A673 (cell line): ENCODE measurements at regions of chr7 and their contacts with region 1.

Region 1: DNA sequence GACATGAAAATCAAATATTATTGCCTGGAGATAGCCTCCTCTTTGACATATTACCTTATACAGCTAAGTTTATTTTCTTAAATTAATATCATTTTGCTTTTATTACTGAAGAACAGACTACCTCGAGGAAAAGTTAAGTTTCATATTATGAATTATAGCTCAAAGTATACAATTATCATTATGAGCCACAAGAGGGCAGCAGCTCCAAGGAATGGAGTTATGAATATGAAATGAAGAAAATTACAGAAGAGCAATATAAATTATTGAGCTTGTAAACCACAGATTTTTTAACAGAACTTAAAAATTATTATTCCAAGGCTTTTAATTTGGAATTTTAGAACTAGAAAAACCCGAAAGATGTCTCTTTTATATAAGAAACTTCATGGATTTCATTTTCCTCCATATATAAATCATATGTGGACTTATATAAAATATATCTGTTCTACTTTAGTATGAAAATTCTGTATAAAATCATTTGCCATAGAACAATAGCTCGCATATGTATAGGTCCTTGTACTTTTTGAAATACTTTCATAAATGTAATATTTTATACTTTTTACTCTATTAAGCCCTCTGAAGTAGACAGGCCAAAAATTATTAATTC is 40.1 kb downstream of the IQUB start:
- DNase-seq: peak; percentile 53
- H3K4me3 ChIP-seq: no peak overlapping the region
- H3K27ac ChIP-seq: no peak overlapping the region
- H3K4me1 ChIP-seq: no peaks in the 10 kb centered on the region
- H3K27me3 ChIP-seq: no peaks in the 10 kb centered on the region
- CTCF ChIP-seq: peak; percentile 81

Region 2: GRCh38 chr7:123417580-123417979 is 76.7 kb before region 1 on chr7:
- CTCF ChIA-PET with region 1: no interaction called
- POLR2A ChIA-PET with region 1: no interaction called
- intact Hi-C with region 1: no loop called
- DNase-seq: no peak
- H3K4me3 ChIP-seq: no peak overlapping the region
- H3K27ac ChIP-seq: no peak overlapping the region
- H3K4me1 ChIP-seq: no peaks in the 10 kb centered on the region
- H3K27me3 ChIP-seq: no peaks in the 10 kb centered on the region
- CTCF ChIP-seq: no peak

Region 3: DNA sequence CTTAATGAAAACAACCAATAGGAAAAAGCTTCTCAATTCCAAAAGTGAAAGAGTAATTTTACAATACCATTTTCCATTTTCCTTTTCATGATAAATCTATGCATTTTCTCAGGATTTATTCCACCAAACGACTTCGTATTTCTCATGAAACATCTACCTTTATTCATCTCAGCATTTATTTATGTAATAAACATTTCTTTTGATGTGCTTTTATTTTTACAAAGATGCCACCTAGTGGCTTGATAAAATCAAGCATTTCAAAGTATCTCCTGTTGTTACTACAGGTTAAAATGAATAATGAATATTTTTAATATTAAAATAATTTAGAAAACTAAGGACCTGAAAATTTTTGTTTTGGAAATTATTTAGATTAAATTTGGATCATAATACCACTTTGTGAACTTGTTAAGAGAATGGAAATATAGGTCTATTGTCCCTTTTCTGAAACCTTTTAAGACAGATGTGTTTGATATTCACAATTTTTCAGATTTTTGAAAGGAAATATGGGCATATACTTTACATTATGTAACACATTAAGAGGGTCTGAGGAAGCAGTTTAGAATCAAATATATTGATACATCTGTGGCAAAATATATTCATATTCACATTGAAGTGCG is 42.8 kb after region 1 on chr7:
- CTCF ChIA-PET with region 1: interaction called, 4 read pairs
- POLR2A ChIA-PET with region 1: no interaction called
- intact Hi-C with region 1: loop called (anchors 1 kb)
- DNase-seq: peak; percentile 50
- H3K4me3 ChIP-seq: no peak overlapping the region
- H3K27ac ChIP-seq: peak overlapping the region; percentile 11
- H3K4me1 ChIP-seq: peaks cover 32% of the 10 kb centered on the region
- H3K27me3 ChIP-seq: peaks cover 8% of the 10 kb centered on the region
- CTCF ChIP-seq: peak; percentile 70

Region 4: GRCh38 chr7:123624527-123625183 is 130.4 kb after region 1 on chr7:
- CTCF ChIA-PET with region 1: interaction called, 4 read pairs
- POLR2A ChIA-PET with region 1: no interaction called
- intact Hi-C with region 1: loop called (anchors 10 kb)
- DNase-seq: peak; percentile 42
- H3K4me3 ChIP-seq: no peak overlapping the region
- H3K27ac ChIP-seq: no peak overlapping the region
- H3K4me1 ChIP-seq: no peaks in the 10 kb centered on the region
- H3K27me3 ChIP-seq: no peaks in the 10 kb centered on the region
- CTCF ChIP-seq: peak; percentile 69

Region 5: GRCh38 chr7:123709525-123709924 is 215.2 kb after region 1 on chr7:
- CTCF ChIA-PET with region 1: no interaction called
- POLR2A ChIA-PET with region 1: no interaction called
- intact Hi-C with region 1: loop called (anchors 10 kb)
- DNase-seq: peak; percentile 23
- H3K4me3 ChIP-seq: no peak overlapping the region
- H3K27ac ChIP-seq: peak overlapping the region; percentile 32
- H3K4me1 ChIP-seq: peaks cover 36% of the 10 kb centered on the region
- H3K27me3 ChIP-seq: no peaks in the 10 kb centered on the region
- CTCF ChIP-seq: no peak